ENCODE measurements at regions of chr16 and their contacts with region 1.

Region 1: GRCh38 chr16:56964243-56965148 is 2.7 kb downstream of the CETP start:
- DNase-seq: peak; percentile 84 to 97
- H3K4me3 ChIP-seq: no peak overlapping the region
- CTCF ChIP-seq: peak in 1 of 3 donors; percentile 86
- POLR2A ChIP-seq: no peak

Region 2: GRCh38 chr16:57147381-57148221 is 183.1 kb after region 1 on chr16:
- intact Hi-C with region 1: loop called (anchors 10 kb)
- DNase-seq: peak in 1 of 2 donors; percentile 85
- H3K4me3 ChIP-seq: no peak overlapping the region
- CTCF ChIP-seq: no peak
- POLR2A ChIP-seq: no peak

Region 3: GRCh38 chr16:57325458-57325857 is 361.0 kb after region 1 on chr16:
- intact Hi-C with region 1: no loop called
- DNase-seq: no peak
- H3K4me3 ChIP-seq: no peak overlapping the region
- CTCF ChIP-seq: no peak
- POLR2A ChIP-seq: no peak